Mammary epithelial cell (primary cell): ENCODE measurements at regions of chr14 and their contacts with region 1.

Region 1: GRCh38 chr14:76320486-76320885 is 55.5 kb upstream of the ESRRB start:
- DNase-seq: no peak
- H3K4me3 ChIP-seq: no peak overlapping the region
- H3K27ac ChIP-seq: no peak overlapping the region
- H3K4me1 ChIP-seq: peaks cover 10% of the 10 kb centered on the region
- H3K27me3 ChIP-seq: no peaks in the 10 kb centered on the region
- CTCF ChIP-seq: no peak

Region 2: DNA sequence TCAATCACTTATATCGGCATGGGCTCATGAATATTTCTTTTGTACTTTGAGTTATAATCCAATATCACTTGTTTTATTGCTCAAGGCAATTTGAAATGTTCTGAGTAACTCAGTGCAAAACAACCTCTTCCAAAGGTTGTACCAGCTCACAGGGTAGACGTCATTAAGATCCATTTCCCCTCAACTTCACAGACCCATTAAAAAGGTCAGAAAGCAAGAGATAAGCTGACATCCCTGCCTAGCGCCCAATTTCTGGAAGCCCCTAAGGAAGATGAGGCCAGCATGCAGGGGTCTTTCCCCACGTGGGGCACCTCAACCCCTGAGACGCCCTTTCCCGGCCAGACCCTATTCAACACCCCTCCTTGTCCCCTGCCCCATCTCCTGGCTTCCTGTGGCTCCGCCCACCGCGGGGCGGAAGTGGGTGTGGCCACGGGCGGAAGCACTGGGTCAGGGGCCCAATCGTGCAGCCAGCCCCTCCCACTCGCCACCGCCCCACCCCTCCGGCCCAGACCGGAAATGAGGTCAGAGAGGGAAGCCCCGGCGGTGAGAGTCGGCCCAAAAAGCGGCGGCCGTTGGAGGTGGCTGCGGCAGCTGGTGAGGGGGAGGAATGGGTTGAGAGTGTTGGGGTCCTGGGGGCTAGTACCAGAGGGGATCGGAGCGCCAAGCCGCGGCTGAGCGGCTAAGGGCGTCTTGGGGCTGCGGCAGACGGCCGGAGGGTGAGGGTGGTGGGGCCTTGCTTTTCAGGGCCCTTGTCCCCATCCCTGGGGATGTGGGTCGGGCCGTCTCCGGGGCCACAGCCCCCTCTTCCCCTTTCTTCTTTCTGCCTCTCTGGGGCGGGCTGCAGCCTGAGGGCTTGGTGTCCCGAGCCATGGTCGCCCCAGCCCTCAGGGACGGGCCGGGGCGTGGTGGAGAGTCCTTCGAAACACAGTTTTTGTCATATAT is 168.8 kb before region 1 on chr14 and contains the start of gene GPATCH2L:
- CTCF ChIA-PET with region 1: no interaction called
- dilution Hi-C with region 1: no loop called
- in situ Hi-C with region 1: no loop called
- intact Hi-C with region 1: loop called (anchors 5 kb)
- DNase-seq: peak; percentile 88
- H3K4me3 ChIP-seq: peak within 1 kb of the TSS; percentile 80 to 84 (median 82)
- H3K27ac ChIP-seq: peak within 1 kb of the TSS; percentile 86
- H3K4me1 ChIP-seq: peaks cover 28% of the 10 kb centered on the region
- H3K27me3 ChIP-seq: no peaks in the 10 kb centered on the region
- CTCF ChIP-seq: no peak
- total RNA-seq, gene GPATCH2L: 65.1 to 69.5 TPM

Region 3: GRCh38 chr14:76219873-76220272 is 100.6 kb before region 1 on chr14:
- CTCF ChIA-PET with region 1: no interaction called
- dilution Hi-C with region 1: loop called (anchors 5 kb)
- in situ Hi-C with region 1: no loop called
- intact Hi-C with region 1: no loop called
- DNase-seq: no peak
- H3K4me3 ChIP-seq: no peak overlapping the region
- H3K27ac ChIP-seq: no peak overlapping the region
- H3K4me1 ChIP-seq: no peaks in the 10 kb centered on the region
- H3K27me3 ChIP-seq: no peaks in the 10 kb centered on the region
- CTCF ChIP-seq: no peak

Region 4: GRCh38 chr14:76373456-76373855 is 53.0 kb after region 1 on chr14:
- CTCF ChIA-PET with region 1: no interaction called
- dilution Hi-C with region 1: loop called (anchors 5 kb)
- in situ Hi-C with region 1: no loop called
- intact Hi-C with region 1: no loop called
- DNase-seq: no peak
- H3K4me3 ChIP-seq: no peak overlapping the region
- H3K27ac ChIP-seq: no peak overlapping the region
- H3K4me1 ChIP-seq: peaks cover 15% of the 10 kb centered on the region
- H3K27me3 ChIP-seq: peaks cover 19% of the 10 kb centered on the region
- CTCF ChIP-seq: peak in 1 of 2 donors; percentile 12

Region 5: GRCh38 chr14:76439237-76439775 is 118.8 kb after region 1 on chr14:
- CTCF ChIA-PET with region 1: no interaction called
- dilution Hi-C with region 1: no loop called
- in situ Hi-C with region 1: no loop called
- intact Hi-C with region 1: no loop called
- DNase-seq: no peak
- H3K4me3 ChIP-seq: no peak overlapping the region
- H3K27ac ChIP-seq: no peak overlapping the region
- H3K4me1 ChIP-seq: no peaks in the 10 kb centered on the region
- H3K27me3 ChIP-seq: peaks cover 2% of the 10 kb centered on the region
- CTCF ChIP-seq: no peak